Common myeloid progenitor, CD34-positive (primary cell): ENCODE measurements at regions of chr3 and their contacts with region 1.

Region 1: DNA sequence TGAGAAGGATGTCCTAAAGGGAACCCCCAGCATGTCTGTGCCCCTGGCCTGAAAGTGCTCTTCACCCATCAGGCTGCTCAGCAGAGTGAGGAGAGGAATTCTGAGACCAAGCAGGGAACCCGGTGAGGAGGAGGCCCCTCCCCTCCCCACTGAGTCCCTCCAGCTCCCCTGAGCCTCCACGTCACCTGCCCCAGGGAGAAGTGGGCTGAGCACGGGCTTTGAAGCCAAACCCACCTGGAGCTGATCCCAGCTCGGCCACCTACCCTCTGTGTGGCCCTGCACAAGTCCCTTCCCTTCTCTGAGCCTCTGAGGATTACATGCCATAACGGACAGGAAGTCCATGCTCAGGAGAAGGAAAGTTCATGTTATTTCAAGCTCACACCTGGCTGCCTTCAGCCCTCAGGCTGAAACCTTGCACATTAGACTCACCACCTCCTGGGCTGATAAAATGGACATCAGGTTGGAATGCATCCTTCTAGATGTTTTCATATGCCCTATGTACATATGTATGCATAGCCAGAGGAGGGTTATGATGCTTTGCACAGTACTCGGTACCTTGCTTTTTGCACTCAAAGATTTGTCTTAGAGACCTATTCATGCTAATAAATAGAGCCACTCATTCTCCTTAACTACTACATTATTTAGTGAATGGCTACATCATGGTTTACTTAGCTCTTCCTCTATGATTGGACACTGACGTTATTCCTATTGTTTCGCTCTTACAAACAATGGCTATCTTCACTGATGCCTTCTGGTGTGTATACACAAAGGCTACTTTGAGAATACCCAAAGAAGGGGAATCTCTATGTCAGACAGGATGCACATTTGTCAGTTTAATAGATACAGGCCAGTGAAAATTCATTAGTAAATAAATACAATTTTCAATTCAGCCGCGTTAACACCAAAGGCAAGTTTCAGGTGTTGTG is 31.6 kb upstream of the GATA2 start:
- DNase-seq: no peak
- H3K4me3 ChIP-seq: no peak overlapping the region
- H3K27ac ChIP-seq: no peak overlapping the region
- H3K4me1 ChIP-seq: peaks cover 0 to 14% (median 5%) of the 10 kb centered on the region in 4 experiments
- H3K27me3 ChIP-seq: no peaks in the 10 kb centered on the region

Region 2: DNA sequence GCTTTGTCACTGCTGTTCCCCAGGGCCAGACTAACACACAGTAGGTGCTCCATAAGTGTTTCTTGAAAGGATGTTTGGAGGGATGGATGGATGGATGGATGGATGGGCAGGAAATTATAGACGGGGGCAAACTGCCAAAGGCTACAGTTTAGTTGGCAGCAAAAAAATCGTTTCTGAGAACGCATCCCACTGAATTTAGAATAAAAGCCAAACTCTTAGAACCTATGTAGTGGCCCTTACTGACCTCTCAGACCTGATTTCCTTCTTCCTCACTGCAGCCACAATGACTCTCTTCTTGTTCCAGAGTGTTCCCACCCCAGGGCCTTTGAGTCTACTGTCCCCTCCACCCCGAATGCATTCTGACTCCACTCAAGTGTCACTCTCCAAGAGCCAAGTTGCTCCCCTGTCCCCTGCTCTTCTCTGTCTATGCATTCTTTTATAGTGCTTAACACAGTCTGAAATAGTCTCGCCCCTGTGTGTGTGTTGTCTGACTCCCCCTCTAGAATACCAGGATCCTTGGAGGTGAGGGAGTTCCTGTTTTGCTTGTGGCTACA is 26.4 kb before region 1 on chr3:
- CTCF ChIA-PET with region 1: no interaction called
- POLR2A ChIA-PET with region 1: no interaction called
- DNase-seq: no peak
- H3K4me3 ChIP-seq: peak overlapping the region in 4 of 7 experiments; percentile 1 to 82 (median 43)
- H3K27ac ChIP-seq: no peak overlapping the region
- H3K4me1 ChIP-seq: peaks cover 2 to 46% (median 28%) of the 10 kb centered on the region in 4 experiments
- H3K27me3 ChIP-seq: peaks cover 0 to 2% (median 0%) of the 10 kb centered on the region in 5 experiments

Region 3: GRCh38 chr3:128539376-128539775 is 14.7 kb after region 1 on chr3:
- CTCF ChIA-PET with region 1: interaction called, 10 read pairs
- POLR2A ChIA-PET with region 1: no interaction called
- DNase-seq: no peak
- H3K4me3 ChIP-seq: no peak overlapping the region
- H3K27ac ChIP-seq: no peak overlapping the region
- H3K4me1 ChIP-seq: peaks cover 0 to 1% (median under 1%) of the 10 kb centered on the region in 4 experiments
- H3K27me3 ChIP-seq: no peaks in the 10 kb centered on the region